ENCODE measurements at regions of chr11 and their contacts with region 1.

Region 1: GRCh38 chr11:3037040-3037944 is 19.9 kb downstream of the CARS1 start:
- DNase-seq: peak in 7 of 9 donors; percentile 9 to 43 (median 23)
- ATAC-seq: peak; percentile 72
- H3K4me3 ChIP-seq: no peak overlapping the region
- H3K4me3 Mint-ChIP-seq: peak overlapping the region in 1 of 10 donors; percentile 43
- H3K27ac ChIP-seq: no peak overlapping the region
- H3K27ac Mint-ChIP-seq: peak overlapping the region in 4 of 9 donors; percentile 18 to 87 (median 48)
- H3K4me1 ChIP-seq: peaks cover 3 to 7% of the 10 kb centered on the region in 2 donors
- H3K4me1 Mint-ChIP-seq: peaks cover 12 to 32% (median 18%) of the 10 kb centered on the region in 7 donors
- H3K27me3 ChIP-seq: no peaks in the 10 kb centered on the region
- H3K27me3 Mint-ChIP-seq: no peaks in the 10 kb centered on the region

Region 2: GRCh38 chr11:3057069-3057963 is 20.0 kb after region 1 on chr11 and contains the start of gene CARS1:
- CTCF ChIA-PET with region 1: no interaction called
- POLR2A ChIA-PET with region 1: no interaction called
- intact Hi-C with region 1: loop called in 1 of 2 experiments (anchors 2 kb)
- DNase-seq: peak; percentile 82 to 93 (median 89)
- ATAC-seq: peak; percentile 99
- H3K4me3 ChIP-seq: peak within 1 kb of the TSS; percentile 85
- H3K4me3 Mint-ChIP-seq: peak within 1 kb of the TSS; percentile 86 to 95 (median 89)
- H3K27ac ChIP-seq: peak within 1 kb of the TSS; percentile 91
- H3K27ac Mint-ChIP-seq: peak within 1 kb of the TSS; percentile 44 to 89 (median 87)
- H3K4me1 ChIP-seq: peaks cover 14% of the 10 kb centered on the region in 2 donors
- H3K4me1 Mint-ChIP-seq: peaks cover 25 to 42% (median 39%) of the 10 kb centered on the region in 7 donors
- H3K27me3 ChIP-seq: no peaks in the 10 kb centered on the region
- H3K27me3 Mint-ChIP-seq: no peaks in the 10 kb centered on the region
- total RNA-seq, gene CARS1: 27.8 to 70.4 (median 53.7) TPM